ENCODE measurements at regions of chr6 and their contacts with region 1.

Region 1: GRCh38 chr6:88780714-88781389 is 182.6 kb downstream of the RNGTT start:
- DNase-seq: peak; percentile 66
- H3K4me3 Mint-ChIP-seq: no peak overlapping the region
- H3K27ac Mint-ChIP-seq: no peak overlapping the region
- H3K4me1 Mint-ChIP-seq: peaks cover 5% of the 10 kb centered on the region
- H3K27me3 Mint-ChIP-seq: no peaks in the 10 kb centered on the region

Region 2: DNA sequence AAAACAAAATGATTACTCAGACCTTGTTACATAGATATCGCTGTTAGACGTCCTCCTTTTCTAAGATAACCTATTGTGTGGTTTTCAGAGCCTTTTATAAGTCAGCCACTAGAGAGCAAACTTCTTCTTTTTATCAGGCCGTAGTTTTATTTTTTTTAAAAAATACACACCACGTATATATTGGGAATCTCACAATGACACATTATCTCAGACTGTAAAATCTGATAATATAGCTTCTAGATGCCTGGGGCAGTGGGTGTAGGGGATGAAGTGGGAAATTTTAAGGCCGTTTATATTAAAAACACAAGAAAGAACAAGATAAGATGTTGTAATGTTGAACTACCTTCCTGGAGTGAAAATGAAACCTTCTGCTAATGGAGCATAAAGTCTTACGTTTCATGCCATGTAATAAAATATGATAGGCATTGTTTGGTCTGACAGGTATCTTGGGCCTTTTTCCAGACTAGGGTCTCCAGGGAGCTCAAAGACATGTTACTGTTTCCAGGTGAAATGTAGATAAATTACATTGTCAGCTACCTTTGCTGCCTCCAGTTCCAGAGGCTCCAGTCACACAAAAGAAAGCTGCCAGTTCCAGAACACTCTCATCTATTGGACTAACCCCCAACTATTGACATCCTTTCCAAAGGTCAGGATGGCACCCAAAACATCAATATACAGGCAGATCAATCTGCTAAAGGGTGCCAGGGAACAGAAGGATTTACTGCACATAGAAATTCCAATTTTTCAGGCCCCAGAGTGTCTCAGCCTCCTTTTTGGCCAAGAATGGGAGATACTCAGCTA is 948.6 kb before region 1 on chr6:
- CTCF ChIA-PET with region 1: interaction called, 3 read pairs
- intact Hi-C with region 1: loop called (anchors 1 kb)
- DNase-seq: no peak
- H3K4me3 Mint-ChIP-seq: peak overlapping the region; percentile 69
- H3K27ac Mint-ChIP-seq: peak overlapping the region; percentile 72
- H3K4me1 Mint-ChIP-seq: peaks cover 8% of the 10 kb centered on the region
- H3K27me3 Mint-ChIP-seq: no peaks in the 10 kb centered on the region

Region 3: DNA sequence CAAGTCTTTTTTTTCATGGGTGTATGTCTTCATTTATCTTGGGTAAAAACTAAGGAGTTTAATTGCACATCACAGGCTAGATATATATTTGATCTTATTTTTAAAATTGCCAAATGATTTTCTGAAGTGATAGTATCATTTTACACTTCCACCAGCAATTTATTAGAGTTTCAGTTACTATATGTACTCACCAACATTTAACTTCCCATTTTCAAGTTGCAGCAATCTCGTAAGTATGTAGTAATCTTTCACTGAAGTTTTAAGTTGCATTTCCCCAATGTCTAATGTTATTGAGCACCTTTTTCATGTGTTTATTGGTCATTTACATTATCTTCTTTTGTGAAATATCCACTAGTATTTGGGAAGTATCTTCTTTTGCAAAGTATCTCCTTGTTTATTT is 337.3 kb before region 1 on chr6:
- CTCF ChIA-PET with region 1: no interaction called
- intact Hi-C with region 1: no loop called
- DNase-seq: no peak
- H3K4me3 Mint-ChIP-seq: no peak overlapping the region
- H3K27ac Mint-ChIP-seq: no peak overlapping the region
- H3K4me1 Mint-ChIP-seq: no peaks in the 10 kb centered on the region
- H3K27me3 Mint-ChIP-seq: peaks cover 3% of the 10 kb centered on the region

Region 4: DNA sequence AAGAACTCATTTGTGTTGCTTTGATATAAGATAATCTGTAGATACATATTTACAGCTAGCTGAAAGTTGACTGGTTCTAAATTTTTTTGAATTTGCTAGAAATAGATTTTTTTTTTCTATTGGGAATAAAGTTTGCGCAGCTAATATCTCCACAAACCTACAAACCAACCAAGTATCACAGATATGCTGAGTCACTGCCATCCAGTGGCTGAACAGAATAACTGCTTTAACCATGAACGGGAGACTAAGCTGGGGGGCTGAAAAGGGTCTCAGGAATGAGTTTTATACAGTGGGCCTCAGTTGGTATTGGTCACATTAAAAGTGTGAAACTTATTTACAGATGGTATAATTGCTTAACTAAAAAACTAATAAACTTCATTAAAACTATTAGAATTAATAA is 288.0 kb before region 1 on chr6:
- CTCF ChIA-PET with region 1: no interaction called
- intact Hi-C with region 1: loop called (anchors 10 kb)
- DNase-seq: no peak
- H3K4me3 Mint-ChIP-seq: no peak overlapping the region
- H3K27ac Mint-ChIP-seq: no peak overlapping the region
- H3K4me1 Mint-ChIP-seq: no peaks in the 10 kb centered on the region
- H3K27me3 Mint-ChIP-seq: peaks cover 13% of the 10 kb centered on the region

Region 5: DNA sequence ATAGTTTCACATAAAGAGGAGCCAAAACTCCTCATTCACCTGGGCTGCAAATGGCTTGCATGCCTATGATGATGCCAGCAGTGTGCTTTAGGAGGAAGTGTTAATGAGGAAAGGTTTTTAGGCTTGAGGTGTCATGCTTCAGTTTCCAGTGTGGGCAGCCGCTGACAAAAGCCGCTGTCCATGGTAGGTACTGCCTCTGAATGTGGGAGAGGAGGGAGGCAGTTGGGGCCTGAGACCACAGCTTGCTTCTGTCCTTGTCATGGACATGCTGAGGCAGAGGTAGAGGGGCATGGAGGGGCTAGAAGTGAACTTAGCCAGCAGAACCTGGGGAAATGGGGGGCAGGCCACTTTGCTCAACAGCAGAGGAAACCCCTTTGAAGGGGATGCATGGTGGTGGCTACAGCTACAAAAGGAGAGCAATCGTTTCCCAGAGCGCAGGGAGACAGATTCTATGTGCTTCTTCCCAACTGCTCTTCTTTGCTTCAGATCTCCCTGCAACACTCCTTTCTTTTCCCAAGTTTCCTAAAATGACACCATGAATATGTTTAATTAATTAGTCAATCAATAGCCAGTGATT is 242.6 kb before region 1 on chr6:
- CTCF ChIA-PET with region 1: no interaction called
- intact Hi-C with region 1: no loop called
- DNase-seq: peak; percentile 16
- H3K4me3 Mint-ChIP-seq: no peak overlapping the region
- H3K27ac Mint-ChIP-seq: no peak overlapping the region
- H3K4me1 Mint-ChIP-seq: no peaks in the 10 kb centered on the region
- H3K27me3 Mint-ChIP-seq: peaks cover 46% of the 10 kb centered on the region

Region 6: DNA sequence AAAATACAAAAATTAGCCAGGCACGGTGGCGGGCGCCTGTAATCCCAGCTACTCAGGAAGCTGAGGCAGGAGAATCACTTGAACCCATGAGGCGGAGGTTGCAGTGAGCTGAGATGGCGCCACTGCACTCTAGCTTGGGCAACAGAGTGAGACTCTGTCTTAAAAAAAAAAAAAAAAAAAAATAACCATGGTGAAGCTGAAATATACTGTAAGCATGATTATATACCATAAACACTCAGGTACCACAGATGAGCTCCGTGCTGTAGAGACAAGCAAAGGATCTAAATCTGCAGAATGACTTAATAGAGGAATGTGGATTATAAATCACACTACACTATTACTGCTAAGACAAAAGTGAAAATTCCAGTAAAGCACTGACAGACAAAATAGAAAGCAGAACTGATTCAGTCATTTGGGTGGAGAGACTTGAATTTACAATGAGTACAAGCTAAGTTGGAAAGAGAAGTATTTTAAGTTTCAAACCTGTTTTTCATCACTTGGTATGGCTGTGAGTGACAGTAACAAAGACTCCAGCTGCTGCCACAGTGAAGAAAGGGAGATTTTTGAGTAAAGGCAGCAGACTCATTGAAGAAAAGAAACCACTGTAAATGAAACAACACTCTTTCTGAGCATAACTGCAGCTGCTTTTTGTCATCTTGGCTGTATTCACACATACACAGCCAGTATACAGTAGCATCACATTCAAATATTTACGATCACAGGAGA is 139.5 kb before region 1 on chr6:
- CTCF ChIA-PET with region 1: no interaction called
- intact Hi-C with region 1: loop called (anchors 5 kb)
- DNase-seq: peak; percentile 19
- H3K4me3 Mint-ChIP-seq: no peak overlapping the region
- H3K27ac Mint-ChIP-seq: peak overlapping the region; percentile 54
- H3K4me1 Mint-ChIP-seq: peaks cover 14% of the 10 kb centered on the region
- H3K27me3 Mint-ChIP-seq: no peaks in the 10 kb centered on the region

Region 7: GRCh38 chr6:88870717-88871330 is 90.0 kb after region 1 on chr6:
- CTCF ChIA-PET with region 1: interaction called, 21 read pairs
- intact Hi-C with region 1: loop called (anchors 1 kb)
- DNase-seq: peak; percentile 63
- H3K4me3 Mint-ChIP-seq: no peak overlapping the region
- H3K27ac Mint-ChIP-seq: no peak overlapping the region
- H3K4me1 Mint-ChIP-seq: peaks cover 33% of the 10 kb centered on the region
- H3K27me3 Mint-ChIP-seq: no peaks in the 10 kb centered on the region

Region 8: DNA sequence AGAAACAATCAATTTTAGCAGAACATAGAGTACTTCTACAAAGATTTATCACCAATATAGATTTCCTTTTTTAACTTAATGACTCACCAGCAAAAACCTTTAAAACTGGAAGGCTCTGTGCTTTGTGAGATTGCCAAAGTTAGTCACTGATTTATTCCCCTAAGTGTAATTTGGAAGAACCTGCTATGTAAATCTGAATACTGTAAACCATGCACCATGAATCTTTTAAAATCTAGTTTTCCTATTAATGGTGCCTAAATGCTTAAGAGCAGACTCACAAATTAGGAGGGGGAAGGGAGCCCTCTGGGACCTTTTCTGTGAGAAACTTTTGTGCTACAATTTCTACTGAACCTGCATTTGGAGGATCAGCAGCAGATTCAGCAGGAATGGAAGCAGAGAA is 241.9 kb after region 1 on chr6:
- CTCF ChIA-PET with region 1: no interaction called
- intact Hi-C with region 1: no loop called
- DNase-seq: no peak
- H3K4me3 Mint-ChIP-seq: no peak overlapping the region
- H3K27ac Mint-ChIP-seq: no peak overlapping the region
- H3K4me1 Mint-ChIP-seq: no peaks in the 10 kb centered on the region
- H3K27me3 Mint-ChIP-seq: no peaks in the 10 kb centered on the region

Region 9: DNA sequence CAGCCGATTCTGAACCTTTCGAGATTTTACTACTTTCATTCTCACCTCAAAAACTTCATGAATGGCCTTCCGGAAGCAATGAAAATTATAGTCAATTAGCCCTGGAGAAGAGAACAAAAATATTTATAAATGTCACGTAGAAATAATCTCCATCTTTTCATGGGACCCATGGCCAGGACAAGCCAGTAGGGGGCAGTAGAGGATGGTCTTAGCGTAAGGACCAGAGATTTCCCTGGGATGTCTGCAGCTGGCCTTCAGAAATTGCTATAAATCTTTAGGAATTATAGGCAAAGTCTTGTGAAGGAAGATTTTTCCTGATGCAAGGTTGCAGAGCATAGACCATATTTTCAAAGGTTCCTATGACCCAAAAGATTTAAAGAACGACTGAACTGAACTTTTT is 587.3 kb after region 1 on chr6:
- CTCF ChIA-PET with region 1: no interaction called
- intact Hi-C with region 1: no loop called
- DNase-seq: peak; percentile 82
- H3K4me3 Mint-ChIP-seq: no peak overlapping the region
- H3K27ac Mint-ChIP-seq: no peak overlapping the region
- H3K4me1 Mint-ChIP-seq: peaks cover 23% of the 10 kb centered on the region
- H3K27me3 Mint-ChIP-seq: no peaks in the 10 kb centered on the region